MCF 10A (cell line): ENCODE measurements at regions of chr11 and their contacts with region 1.

Region 1: GRCh38 chr11:7513234-7514098 is at the start of gene PPFIBP2:
- DNase-seq: peak; percentile 70
- H3K4me3 Mint-ChIP-seq: peak within 1 kb of the TSS; percentile 83
- H3K27ac Mint-ChIP-seq: peak within 1 kb of the TSS; percentile 52
- H3K4me1 Mint-ChIP-seq: no peaks in the 10 kb centered on the region
- H3K27me3 Mint-ChIP-seq: peaks cover 17% of the 10 kb centered on the region
- CTCF ChIP-seq: peak; percentile 74
- total RNA-seq, gene PPFIBP2: 3.5 and 4.3 TPM in 2 replicates

Region 2: DNA sequence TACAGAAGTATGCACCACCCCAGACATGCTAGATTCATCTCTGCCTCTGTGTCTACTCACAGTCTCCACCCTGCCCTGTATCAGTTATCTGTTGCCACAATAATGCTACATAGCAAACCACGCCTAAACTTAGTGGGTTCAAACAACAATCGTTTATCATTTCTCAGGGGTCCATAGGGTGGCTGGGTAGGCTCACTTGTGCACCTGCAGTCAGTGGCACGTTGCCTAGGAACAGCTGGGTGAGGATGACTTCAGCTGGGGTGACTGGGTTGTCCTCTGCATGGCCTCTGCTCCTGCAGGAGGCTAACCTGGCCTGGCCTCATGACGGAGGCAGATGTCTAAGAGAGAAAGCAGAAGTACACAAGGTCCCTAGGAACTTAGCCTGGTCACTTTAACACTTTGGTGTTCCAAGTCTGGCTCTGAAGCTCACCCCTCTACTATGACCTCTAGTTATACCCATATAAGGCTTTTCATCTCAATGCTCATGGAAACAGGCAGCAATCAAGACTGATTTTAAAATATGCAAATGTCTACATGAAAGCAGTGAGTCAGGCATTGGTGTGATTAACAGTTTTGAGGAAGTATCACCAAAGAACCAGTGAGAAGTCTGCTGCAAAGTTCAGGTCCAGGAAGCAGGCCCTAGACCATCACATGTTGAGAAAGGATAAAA is 17.4 kb before region 1 on chr11:
- CTCF ChIA-PET with region 1: interaction called, 15 read pairs
- POLR2A ChIA-PET with region 1: interaction called, 6 read pairs
- intact Hi-C with region 1: no loop called
- DNase-seq: no peak
- H3K4me3 Mint-ChIP-seq: no peak overlapping the region
- H3K27ac Mint-ChIP-seq: no peak overlapping the region
- H3K4me1 Mint-ChIP-seq: no peaks in the 10 kb centered on the region
- H3K27me3 Mint-ChIP-seq: no peaks in the 10 kb centered on the region
- CTCF ChIP-seq: no peak

Region 3: GRCh38 chr11:7548659-7549274 is 35.3 kb after region 1 on chr11:
- CTCF ChIA-PET with region 1: interaction called, 11 read pairs
- POLR2A ChIA-PET with region 1: interaction called, 3 read pairs
- intact Hi-C with region 1: no loop called
- DNase-seq: peak; percentile 43
- H3K4me3 Mint-ChIP-seq: no peak overlapping the region
- H3K27ac Mint-ChIP-seq: no peak overlapping the region
- H3K4me1 Mint-ChIP-seq: peaks cover 22% of the 10 kb centered on the region
- H3K27me3 Mint-ChIP-seq: no peaks in the 10 kb centered on the region
- CTCF ChIP-seq: no peak

Region 4: GRCh38 chr11:7651140-7651551 is 137.7 kb after region 1 on chr11:
- CTCF ChIA-PET with region 1: interaction called, 36 read pairs
- POLR2A ChIA-PET with region 1: no interaction called
- intact Hi-C with region 1: no loop called
- DNase-seq: no peak
- H3K4me3 Mint-ChIP-seq: no peak overlapping the region
- H3K27ac Mint-ChIP-seq: no peak overlapping the region
- H3K4me1 Mint-ChIP-seq: no peaks in the 10 kb centered on the region
- H3K27me3 Mint-ChIP-seq: no peaks in the 10 kb centered on the region
- CTCF ChIP-seq: no peak

Region 5: GRCh38 chr11:7688238-7688826 is 174.9 kb after region 1 on chr11:
- CTCF ChIA-PET with region 1: interaction called, 12 read pairs
- POLR2A ChIA-PET with region 1: no interaction called
- intact Hi-C with region 1: no loop called
- DNase-seq: peak; percentile 32
- H3K4me3 Mint-ChIP-seq: no peak overlapping the region
- H3K27ac Mint-ChIP-seq: no peak overlapping the region
- H3K4me1 Mint-ChIP-seq: peaks cover 13% of the 10 kb centered on the region
- H3K27me3 Mint-ChIP-seq: peaks cover 11% of the 10 kb centered on the region
- CTCF ChIP-seq: peak; percentile 62